ENCODE measurements at regions of chr9 and their contacts with region 1.

Region 1: DNA sequence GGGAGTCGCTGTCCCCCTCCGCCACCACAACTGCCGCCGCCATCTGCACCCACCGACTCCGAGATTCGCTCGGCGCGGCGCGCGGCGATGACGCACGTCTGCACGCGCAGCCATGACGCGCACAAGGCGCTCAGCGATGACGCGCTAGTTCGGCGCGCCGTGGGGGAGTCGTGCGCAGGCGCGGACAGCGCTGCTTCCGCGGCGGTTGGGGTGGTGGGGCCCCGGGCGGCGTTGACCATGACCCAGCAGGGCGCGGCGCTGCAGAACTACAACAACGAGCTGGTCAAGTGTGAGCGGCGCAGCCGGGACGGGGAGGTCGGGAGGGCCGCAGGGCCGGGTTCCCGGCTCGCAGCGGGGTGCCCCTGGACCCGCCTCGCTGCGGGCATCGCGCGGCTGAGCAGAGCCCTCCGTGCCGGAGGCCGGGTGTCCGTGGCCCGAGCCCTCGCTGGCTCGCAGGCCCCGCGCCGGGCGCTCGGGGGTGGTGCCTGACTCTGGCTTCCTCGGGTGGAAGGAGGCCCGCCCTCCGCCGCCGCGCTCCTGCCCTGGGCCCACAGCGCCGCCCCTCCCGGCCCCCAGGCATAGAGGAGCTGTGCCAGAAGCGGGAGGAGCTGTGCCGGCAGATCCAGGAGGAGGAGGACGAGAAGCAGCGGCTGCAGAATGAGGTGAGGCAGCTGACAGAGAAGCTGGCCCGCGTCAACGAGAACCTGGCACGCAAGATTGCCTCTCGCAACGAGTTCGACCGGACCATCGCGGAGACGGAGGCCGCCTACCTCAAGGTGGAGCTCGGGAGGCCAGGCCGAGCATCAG is at the starts of genes ANAPC2 and SSNA1:
- DNase-seq: peak; percentile 89 to 94 (median 90)
- H3K4me3 ChIP-seq: peak within 1 kb of the TSS; percentile 91
- H3K4me3 Mint-ChIP-seq: peak within 1 kb of the TSS; percentile 90 to 98 (median 92)
- H3K27ac ChIP-seq: peak within 1 kb of the TSS; percentile 94
- H3K27ac Mint-ChIP-seq: peak within 1 kb of the TSS; percentile 85 to 99 (median 96)
- H3K4me1 ChIP-seq: peaks cover 33% of the 10 kb centered on the region
- H3K4me1 Mint-ChIP-seq: peaks cover 28 to 56% (median 28%) of the 10 kb centered on the region in 3 donors
- H3K27me3 ChIP-seq: no peaks in the 10 kb centered on the region
- H3K27me3 Mint-ChIP-seq: no peaks in the 10 kb centered on the region
- total RNA-seq, gene ANAPC2: 50.2 to 57.0 TPM
- total RNA-seq, gene SSNA1: 114 to 118 TPM

Region 2: DNA sequence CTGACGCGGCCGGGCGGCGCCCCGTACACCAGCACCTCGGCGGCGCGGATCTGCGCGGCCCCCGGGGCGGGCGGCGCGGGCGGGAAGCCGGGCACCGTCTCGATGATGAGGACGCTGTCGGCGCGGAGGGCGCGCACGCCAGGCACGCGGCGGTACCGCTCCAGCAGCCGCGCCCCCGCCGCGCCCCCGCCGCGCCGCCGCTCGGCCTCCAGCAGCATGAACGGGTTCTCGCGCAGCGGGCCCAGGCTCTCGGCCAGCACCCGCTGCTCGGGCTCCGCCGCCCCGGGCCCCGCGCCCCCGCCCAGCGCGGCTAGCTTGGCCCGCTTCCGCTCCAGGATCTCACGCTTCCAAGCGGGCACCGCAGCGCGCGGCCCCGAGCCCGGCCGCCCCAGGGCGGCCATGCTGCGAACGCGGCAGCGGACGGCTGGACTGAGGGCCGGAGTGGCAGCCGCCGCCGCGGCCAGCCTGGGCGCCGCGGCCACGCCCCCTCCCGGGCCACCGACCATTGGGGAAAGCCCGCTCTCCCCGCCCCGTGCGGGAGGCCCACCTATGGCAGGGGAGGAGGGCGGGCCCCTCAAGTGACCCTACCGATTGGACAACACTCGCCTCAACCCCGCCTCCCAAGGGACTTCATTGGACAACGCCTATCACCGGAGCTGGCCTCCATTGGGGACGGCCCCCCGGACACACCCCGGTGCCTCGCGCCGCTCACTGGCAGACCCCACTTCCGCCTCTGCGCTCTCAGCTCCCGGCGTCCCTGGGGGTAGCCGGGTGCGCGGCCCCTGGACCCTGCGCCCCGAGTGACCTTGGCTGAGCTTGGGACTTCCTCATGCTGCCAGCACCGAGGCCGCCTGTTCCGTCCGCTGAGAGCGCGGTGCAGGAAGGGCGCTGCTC is 11.9 kb after region 1 on chr9 and contains the start of gene TPRN:
- CTCF ChIA-PET with region 1: interaction called, 13 read pairs
- POLR2A ChIA-PET with region 1: interaction called, 20 read pairs
- DNase-seq: peak; percentile 95 to 99 (median 98)
- H3K4me3 ChIP-seq: peak within 1 kb of the TSS; percentile 78
- H3K4me3 Mint-ChIP-seq: peak within 1 kb of the TSS; percentile 79 to 98 (median 83)
- H3K27ac ChIP-seq: peak within 1 kb of the TSS; percentile 74
- H3K27ac Mint-ChIP-seq: peak within 1 kb of the TSS; percentile 66 to 97 (median 78)
- H3K4me1 ChIP-seq: peaks cover 30% of the 10 kb centered on the region
- H3K4me1 Mint-ChIP-seq: peaks cover 20 to 35% (median 21%) of the 10 kb centered on the region in 3 donors
- H3K27me3 ChIP-seq: no peaks in the 10 kb centered on the region
- H3K27me3 Mint-ChIP-seq: no peaks in the 10 kb centered on the region
- total RNA-seq, gene TPRN: 14.1 to 15.1 TPM

Region 3: GRCh38 chr9:137316012-137316976 is 127.6 kb after region 1 on chr9:
- CTCF ChIA-PET with region 1: no interaction called
- POLR2A ChIA-PET with region 1: no interaction called
- DNase-seq: peak in 1 of 5 donors; percentile 28
- H3K4me3 ChIP-seq: no peak overlapping the region
- H3K4me3 Mint-ChIP-seq: peak overlapping the region in 1 of 7 donors; percentile 38
- H3K27ac ChIP-seq: no peak overlapping the region
- H3K27ac Mint-ChIP-seq: no peak overlapping the region
- H3K4me1 ChIP-seq: peaks cover 10% of the 10 kb centered on the region
- H3K4me1 Mint-ChIP-seq: peaks cover 0 to 5% (median 0%) of the 10 kb centered on the region in 3 donors
- H3K27me3 ChIP-seq: no peaks in the 10 kb centered on the region
- H3K27me3 Mint-ChIP-seq: peaks cover 0 to 4% of the 10 kb centered on the region in 2 donors

Measured in CD8-positive, alpha-beta memory T cell (primary cell).